Lower leg skin (tissue), 4 donors: ENCODE measurements at regions of chr10 and their contacts with region 1.

Region 1: GRCh38 chr10:113108212-113108835 is 158.3 kb downstream of the TCF7L2 start:
- DNase-seq: peak in 1 of 2 donors; percentile 77
- H3K4me3 ChIP-seq: no peak overlapping the region
- CTCF ChIP-seq: no peak
- POLR2A ChIP-seq: no peak

Region 2: DNA sequence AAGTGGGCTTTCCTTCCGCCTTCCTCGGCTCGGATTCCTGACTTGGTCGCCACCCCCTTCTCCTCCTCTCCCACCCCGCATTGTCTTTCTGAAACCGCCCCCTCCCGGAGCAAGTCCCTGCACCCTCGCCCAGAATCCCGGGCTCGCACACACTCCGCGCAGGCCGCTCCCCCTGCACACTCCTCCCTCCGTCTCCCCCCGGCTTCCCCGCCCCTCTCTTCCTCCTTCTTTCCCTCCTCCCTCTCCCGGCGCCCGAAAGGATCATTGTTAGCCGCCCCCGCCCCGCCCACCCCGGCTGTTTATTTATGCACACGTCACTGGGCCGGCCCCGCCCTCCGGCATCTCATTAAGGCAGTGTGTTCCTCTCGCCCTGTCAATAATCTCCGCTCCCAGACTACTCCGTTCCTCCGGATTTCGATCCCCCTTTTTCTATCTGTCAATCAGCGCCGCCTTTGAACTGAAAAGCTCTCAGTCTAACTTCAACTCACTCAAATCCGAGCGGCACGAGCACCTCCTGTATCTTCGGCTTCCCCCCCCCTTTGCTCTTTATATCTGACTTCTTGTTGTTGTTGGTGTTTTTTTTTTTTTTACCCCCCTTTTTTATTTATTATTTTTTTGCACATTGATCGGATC is 158.3 kb before region 1 on chr10 and contains the start of gene TCF7L2:
- intact Hi-C with region 1: loop called (anchors 10 kb)
- DNase-seq: peak; percentile 96 to 99
- H3K4me3 ChIP-seq: peak within 1 kb of the TSS; percentile 45
- CTCF ChIP-seq: no peak
- POLR2A ChIP-seq: no peak
- total RNA-seq, gene TCF7L2: 5.6 to 23.1 (median 16.2) TPM